Psoas muscle (tissue), 8 donors: ENCODE measurements at regions of chr17 and their contacts with region 1.

Region 1: DNA sequence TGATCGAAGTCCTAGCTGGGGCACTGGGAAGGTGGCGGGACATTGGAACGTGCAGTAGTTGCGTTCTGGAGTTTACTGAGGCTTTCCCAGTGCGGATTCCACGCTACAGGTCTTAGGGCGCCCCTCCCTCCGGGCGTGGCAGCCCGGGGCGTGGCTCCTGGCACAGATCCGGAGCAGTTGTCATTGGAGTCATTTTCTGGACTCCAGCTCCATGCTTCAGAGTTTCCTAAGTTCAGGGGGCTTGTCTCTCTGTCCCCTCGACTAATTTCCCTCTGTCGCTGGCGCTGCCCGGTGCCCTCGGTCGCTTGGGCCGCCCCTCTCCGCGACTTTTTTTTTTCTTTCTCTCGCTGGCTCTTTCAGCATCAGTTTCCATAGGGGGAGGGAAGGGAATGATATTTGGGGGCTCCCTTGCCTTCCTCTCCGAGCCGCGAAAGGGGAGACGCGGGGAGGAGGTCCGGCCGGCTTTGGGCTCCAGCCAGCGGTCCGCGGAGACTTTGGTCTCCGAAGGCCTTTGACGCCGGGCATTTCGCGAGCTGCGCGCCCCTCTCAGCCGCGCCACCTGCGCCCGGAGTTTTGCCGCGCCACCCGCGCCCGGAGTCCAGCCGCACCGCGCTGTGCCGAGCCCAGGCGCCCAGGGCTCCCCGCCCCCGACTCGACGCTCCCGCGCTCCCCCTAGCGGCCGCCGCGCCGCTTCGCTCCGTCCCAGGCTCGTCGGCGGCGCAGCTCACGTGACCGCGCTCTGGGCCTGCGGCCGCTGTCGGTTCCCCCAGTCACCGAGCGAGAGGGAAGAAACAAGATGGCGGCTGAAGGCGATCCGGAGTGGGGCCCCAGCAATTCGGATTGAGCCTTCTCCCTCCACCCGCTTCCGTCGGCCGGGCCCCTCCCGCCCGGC is at the start of gene BPTF:
- DNase-seq: peak; percentile 90 to 96
- ATAC-seq: peak; percentile 95 to 98 (median 96)
- H3K4me3 ChIP-seq: peak within 1 kb of the TSS; percentile 69
- H3K27ac ChIP-seq: peak within 1 kb of the TSS; percentile 90
- H3K4me1 ChIP-seq: peaks cover 34% of the 10 kb centered on the region
- H3K27me3 ChIP-seq: no peaks in the 10 kb centered on the region
- CTCF ChIP-seq: peak; percentile 95
- total RNA-seq, gene BPTF: 48.0 to 60.9 (median 55.0) TPM

Region 2: GRCh38 chr17:67366193-67367157 is 458.5 kb before region 1 on chr17 and contains the start of gene PSMD12:
- intact Hi-C with region 1: loop called in 1 of 2 experiments (anchors 10 kb)
- DNase-seq: peak; percentile 95 to 97
- ATAC-seq: peak; percentile 93 to 98 (median 96)
- H3K4me3 ChIP-seq: peak within 1 kb of the TSS; percentile 81
- H3K27ac ChIP-seq: peak within 1 kb of the TSS; percentile 97
- H3K4me1 ChIP-seq: peaks cover 34% of the 10 kb centered on the region
- H3K27me3 ChIP-seq: no peaks in the 10 kb centered on the region
- CTCF ChIP-seq: no peak
- total RNA-seq, gene PSMD12: 66.6 to 161 (median 111) TPM

Region 3: GRCh38 chr17:67717624-67718329 is 107.2 kb before region 1 on chr17 and contains the start of gene NOL11:
- intact Hi-C with region 1: loop called (anchors 2 to 10 kb)
- DNase-seq: peak; percentile 99
- ATAC-seq: peak; percentile 99
- H3K4me3 ChIP-seq: peak within 1 kb of the TSS; percentile 80
- H3K27ac ChIP-seq: peak within 1 kb of the TSS; percentile 90
- H3K4me1 ChIP-seq: peaks cover 14% of the 10 kb centered on the region
- H3K27me3 ChIP-seq: no peaks in the 10 kb centered on the region
- CTCF ChIP-seq: peak; percentile 88
- total RNA-seq, gene NOL11: 29.9 to 37.3 (median 33.3) TPM

Region 4: DNA sequence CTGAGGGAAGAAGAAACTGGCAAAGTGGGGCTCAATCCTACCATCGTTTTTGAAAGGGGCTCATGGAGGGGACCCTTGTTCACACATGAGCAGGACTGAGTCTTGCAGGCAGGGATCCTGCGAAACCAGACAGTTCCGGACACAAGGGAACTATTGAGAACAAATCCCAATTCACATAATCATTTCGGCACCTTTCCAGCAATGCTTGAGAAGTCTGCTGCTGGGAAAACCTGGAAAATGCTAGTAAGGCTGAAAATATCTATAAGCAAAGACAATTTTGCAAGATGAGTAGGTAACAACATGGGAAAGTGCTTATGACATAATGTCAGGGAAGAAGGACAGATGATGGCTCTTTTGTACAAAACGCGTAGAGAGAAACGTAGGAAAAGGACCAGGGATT is 51.7 kb before region 1 on chr17:
- intact Hi-C with region 1: no loop called
- DNase-seq: no peak
- ATAC-seq: no peak
- H3K4me3 ChIP-seq: no peak overlapping the region
- H3K27ac ChIP-seq: no peak overlapping the region
- H3K4me1 ChIP-seq: no peaks in the 10 kb centered on the region
- H3K27me3 ChIP-seq: no peaks in the 10 kb centered on the region
- CTCF ChIP-seq: no peak